Psoas muscle (tissue), 8 donors: ENCODE measurements at regions of chr16 and their contacts with region 1.

Region 1: GRCh38 chr16:11705311-11706025 is 37.2 kb downstream of the TXNDC11 start:
- DNase-seq: no peak
- ATAC-seq: peak in 3 of 4 donors; percentile 53 to 72 (median 55)
- H3K4me3 ChIP-seq: no peak overlapping the region
- H3K27ac ChIP-seq: peak overlapping the region; percentile 80
- H3K4me1 ChIP-seq: peaks cover 44% of the 10 kb centered on the region
- H3K27me3 ChIP-seq: no peaks in the 10 kb centered on the region
- CTCF ChIP-seq: no peak

Region 2: GRCh38 chr16:11675561-11676511 is 29.6 kb before region 1 on chr16:
- intact Hi-C with region 1: loop called (anchors 2 to 5 kb)
- DNase-seq: peak; percentile 89 to 97
- ATAC-seq: peak; percentile 78 to 81 (median 80)
- H3K4me3 ChIP-seq: peak overlapping the region; percentile 23
- H3K27ac ChIP-seq: peak overlapping the region; percentile 91
- H3K4me1 ChIP-seq: peaks cover 96% of the 10 kb centered on the region
- H3K27me3 ChIP-seq: no peaks in the 10 kb centered on the region
- CTCF ChIP-seq: no peak

Region 3: GRCh38 chr16:11742539-11743307 is 37.3 kb after region 1 on chr16 and contains the start of gene TXNDC11:
- intact Hi-C with region 1: no loop called
- DNase-seq: peak; percentile 99 to 100
- ATAC-seq: peak; percentile 92 to 96 (median 93)
- H3K4me3 ChIP-seq: peak within 1 kb of the TSS; percentile 88
- H3K27ac ChIP-seq: peak within 1 kb of the TSS; percentile 99
- H3K4me1 ChIP-seq: peaks cover 37% of the 10 kb centered on the region
- H3K27me3 ChIP-seq: no peaks in the 10 kb centered on the region
- CTCF ChIP-seq: no peak
- total RNA-seq, gene TXNDC11: 21.3 to 37.2 (median 33.5) TPM

Region 4: GRCh38 chr16:11752856-11753255 is 47.4 kb after region 1 on chr16:
- intact Hi-C with region 1: no loop called
- DNase-seq: no peak
- ATAC-seq: no peak
- H3K4me3 ChIP-seq: no peak overlapping the region
- H3K27ac ChIP-seq: no peak overlapping the region
- H3K4me1 ChIP-seq: no peaks in the 10 kb centered on the region
- H3K27me3 ChIP-seq: no peaks in the 10 kb centered on the region
- CTCF ChIP-seq: no peak